ENCODE measurements at regions of chr3 and their contacts with region 1.

Region 1: GRCh38 chr3:184174646-184175492 is at the start of gene AP2M1:
- DNase-seq: peak; percentile 97
- ATAC-seq: peak; percentile 86
- H3K4me3 ChIP-seq: peak within 1 kb of the TSS; percentile 97 to 99 (median 99)
- H3K27ac ChIP-seq: peak within 1 kb of the TSS; percentile 77
- H3K4me1 ChIP-seq: peaks cover 24% of the 10 kb centered on the region
- H3K27me3 ChIP-seq: no peaks in the 10 kb centered on the region; a peak in 1 of 5 replicates
- CTCF ChIP-seq: peak; percentile 51
- EP300 ChIP-seq: no peak
- POLR2A ChIP-seq: peak; percentile 78 to 97
- RAD21 ChIP-seq: no peak
- total RNA-seq, gene AP2M1: 124 and 126 TPM in 2 replicates

Region 2: DNA sequence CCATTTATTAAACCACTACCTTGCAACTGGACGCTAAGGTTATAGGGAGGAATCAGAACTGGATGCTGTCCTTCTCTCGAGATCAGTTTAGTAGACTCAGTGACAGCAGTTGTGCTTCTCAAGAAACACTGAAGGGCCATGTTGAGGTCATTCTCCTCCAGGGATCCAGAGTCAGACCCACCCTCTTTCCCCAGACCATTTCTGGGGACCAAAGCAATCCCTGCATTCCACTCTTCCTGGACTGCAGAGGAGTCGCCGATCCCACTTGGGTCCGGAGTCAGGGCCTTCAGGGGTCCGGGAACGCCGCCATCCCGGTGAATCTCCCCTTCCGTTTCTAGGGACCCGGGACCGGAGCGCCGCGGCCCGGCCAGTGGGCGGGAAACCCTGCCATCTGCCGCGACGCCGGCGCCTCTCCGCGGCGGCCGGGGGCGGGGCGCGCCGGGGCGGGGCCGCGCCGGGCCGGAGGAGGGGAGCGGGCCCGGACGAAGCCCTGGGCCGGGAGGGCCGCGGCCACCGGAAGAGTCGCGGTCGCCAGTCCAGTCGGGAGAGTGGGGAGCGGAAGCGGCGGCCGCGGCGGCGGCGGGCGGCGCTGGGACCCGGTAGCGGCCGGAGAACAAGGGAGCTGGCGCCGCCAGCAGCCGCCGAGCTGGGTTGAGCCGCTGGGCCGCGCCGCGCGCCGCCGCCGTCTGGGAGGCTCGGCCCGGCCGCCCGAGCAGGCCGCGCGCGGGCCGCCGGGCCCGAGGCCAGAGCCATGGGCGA is 19.8 kb before region 1 on chr3 and contains the start of gene DVL3:
- CTCF ChIA-PET with region 1: no interaction called
- POLR2A ChIA-PET with region 1: interaction called, 8 read pairs
- in situ Hi-C with region 1: no loop called
- intact Hi-C with region 1: loop called (anchors 2 kb)
- DNase-seq: peak; percentile 50
- ATAC-seq: peak; percentile 68
- H3K4me3 ChIP-seq: peak within 1 kb of the TSS; percentile 77 to 100 (median 99)
- H3K27ac ChIP-seq: peak within 1 kb of the TSS; percentile 96
- H3K4me1 ChIP-seq: peaks cover 37% of the 10 kb centered on the region
- H3K27me3 ChIP-seq: no peaks in the 10 kb centered on the region; a peak in 1 of 5 replicates
- CTCF ChIP-seq: no peak; the same call in 1 of the 2 replicates
- EP300 ChIP-seq: no peak
- POLR2A ChIP-seq: peak in 1 of 2 experiments; percentile 60; a peak in 2 of 4 replicates
- RAD21 ChIP-seq: no peak
- total RNA-seq, gene DVL3: 25.4 and 29.0 TPM in 2 replicates